ENCODE measurements at regions of chr12 and their contacts with region 1.

Region 1: GRCh38 chr12:104358347-104359003 is 54.9 kb downstream of the EID3 start:
- DNase-seq: peak; percentile 35
- ATAC-seq: peak; percentile 72
- H3K4me3 ChIP-seq: no peak overlapping the region
- H3K27ac ChIP-seq: no peak overlapping the region
- H3K4me1 ChIP-seq: no peaks in the 10 kb centered on the region
- H3K27me3 ChIP-seq: no peaks in the 10 kb centered on the region
- CTCF ChIP-seq: peak; percentile 78 to 93 (median 79)
- POLR2A ChIP-seq: no peak
- RAD21 ChIP-seq: peak; percentile 87

Region 2: GRCh38 chr12:104057771-104058197 is 300.7 kb before region 1 on chr12:
- CTCF ChIA-PET with region 1: no interaction called
- POLR2A ChIA-PET with region 1: no interaction called
- RAD21 ChIA-PET with region 1: no interaction called
- intact Hi-C with region 1: loop called (anchors 10 kb)
- DNase-seq: no peak
- ATAC-seq: peak; percentile 76
- H3K4me3 ChIP-seq: no peak overlapping the region
- H3K27ac ChIP-seq: no peak overlapping the region
- H3K4me1 ChIP-seq: no peaks in the 10 kb centered on the region
- H3K27me3 ChIP-seq: no peaks in the 10 kb centered on the region
- CTCF ChIP-seq: peak; percentile 78 to 86 (median 79)
- POLR2A ChIP-seq: no peak
- RAD21 ChIP-seq: peak; percentile 87